ENCODE measurements at regions of chr14 and their contacts with region 1.

Region 1: DNA sequence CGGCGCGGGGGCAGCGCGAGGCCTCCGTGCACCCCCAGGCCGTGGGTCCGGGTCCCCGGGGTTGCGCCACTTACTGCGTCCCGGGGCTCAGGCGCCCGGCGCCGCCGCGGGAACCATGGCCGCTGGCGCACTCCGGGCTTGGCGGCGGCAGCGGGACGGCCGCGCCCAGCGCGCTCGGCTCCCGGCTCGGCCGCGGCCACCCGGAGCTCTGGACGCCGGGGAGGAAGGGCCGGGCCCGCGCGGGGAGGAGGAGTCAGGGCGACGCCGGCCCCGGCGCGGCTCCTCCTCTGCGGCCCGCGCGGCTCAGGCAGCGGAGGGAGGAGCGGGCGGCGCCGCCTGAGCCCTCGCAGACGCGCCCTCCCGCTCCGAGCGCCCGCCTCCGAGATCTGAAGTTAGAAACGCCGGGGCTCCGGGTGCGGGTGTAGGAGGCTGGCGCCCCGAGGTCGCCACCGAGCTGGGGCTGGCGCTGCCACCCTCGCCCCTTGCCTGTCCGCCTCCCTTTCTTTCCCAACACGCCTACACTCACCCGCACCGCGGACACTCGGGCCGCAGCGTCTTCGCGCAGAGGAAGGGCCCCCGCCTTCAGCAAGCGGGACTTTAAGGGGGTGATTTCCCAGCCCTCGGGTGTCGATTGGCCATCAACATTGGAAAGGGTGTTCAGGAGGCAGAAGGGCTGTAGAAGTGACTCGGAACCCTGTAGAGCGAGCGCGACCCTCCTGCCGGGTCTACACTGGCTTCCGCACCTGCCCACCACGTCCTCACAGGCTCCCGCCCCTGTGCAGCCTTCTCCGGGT is at the start of gene NIN:
- DNase-seq: peak; percentile 47 to 89 (median 68)
- ATAC-seq: peak; percentile 83
- H3K4me3 ChIP-seq: peak within 1 kb of the TSS; percentile 90
- H3K4me3 Mint-ChIP-seq: peak within 1 kb of the TSS; percentile 99
- H3K27ac ChIP-seq: peak within 1 kb of the TSS; percentile 65 to 88
- H3K27ac Mint-ChIP-seq: peak within 1 kb of the TSS; percentile 92
- H3K4me1 ChIP-seq: peaks cover 37% of the 10 kb centered on the region
- H3K4me1 Mint-ChIP-seq: peaks cover 74% of the 10 kb centered on the region
- H3K27me3 ChIP-seq: no peaks in the 10 kb centered on the region
- H3K27me3 Mint-ChIP-seq: no peaks in the 10 kb centered on the region
- CTCF ChIP-seq: no peak
- total RNA-seq, gene NIN: 96.8 to 98.5 TPM

Region 2: DNA sequence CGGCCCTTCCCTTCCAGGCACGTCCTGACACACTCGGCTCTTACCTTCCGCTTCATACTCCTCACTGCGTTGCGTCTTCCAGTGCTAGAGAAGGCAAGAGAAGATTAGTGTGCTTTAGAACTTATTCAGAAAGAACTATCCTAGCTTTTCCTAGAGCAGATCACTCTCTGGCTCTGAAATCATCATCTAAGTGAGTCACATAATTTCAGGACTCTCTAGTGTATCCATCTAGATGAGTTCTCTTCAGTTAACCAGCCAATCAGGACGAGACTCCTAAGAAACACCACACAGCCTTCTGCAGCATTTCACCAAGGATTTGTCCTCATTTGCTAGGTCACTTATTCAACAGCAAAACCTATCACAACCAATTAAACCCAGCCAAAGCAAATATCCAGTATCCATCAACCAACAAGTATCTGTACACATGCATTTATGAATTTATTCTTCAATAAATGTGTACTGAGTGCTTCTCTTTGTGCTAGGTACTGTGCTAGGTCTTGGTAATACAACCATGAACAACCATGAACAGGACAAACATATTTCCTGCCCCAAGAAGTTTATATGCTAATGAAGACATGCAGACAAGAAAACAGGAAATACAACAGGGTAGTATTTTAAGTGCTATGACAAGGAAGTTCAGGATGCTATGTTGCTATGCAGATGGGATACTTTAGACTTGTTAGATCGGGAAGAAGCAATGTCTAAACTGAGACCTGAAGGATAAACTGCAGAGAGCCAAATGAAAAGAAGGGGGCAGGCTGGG is 52.2 kb before region 1 on chr14:
- CTCF ChIA-PET with region 1: interaction called, 4 read pairs
- POLR2A ChIA-PET with region 1: interaction called, 17 read pairs
- intact Hi-C with region 1: loop called in 1 of 2 experiments (anchors 10 kb)
- DNase-seq: peak in 1 of 14 experiments; percentile 37
- ATAC-seq: no peak
- H3K4me3 ChIP-seq: no peak overlapping the region
- H3K4me3 Mint-ChIP-seq: no peak overlapping the region
- H3K27ac ChIP-seq: no peak overlapping the region
- H3K27ac Mint-ChIP-seq: peak overlapping the region; percentile 54
- H3K4me1 ChIP-seq: peaks cover 30% of the 10 kb centered on the region
- H3K4me1 Mint-ChIP-seq: peaks cover 77% of the 10 kb centered on the region
- H3K27me3 ChIP-seq: no peaks in the 10 kb centered on the region
- H3K27me3 Mint-ChIP-seq: no peaks in the 10 kb centered on the region
- CTCF ChIP-seq: no peak

Region 3: DNA sequence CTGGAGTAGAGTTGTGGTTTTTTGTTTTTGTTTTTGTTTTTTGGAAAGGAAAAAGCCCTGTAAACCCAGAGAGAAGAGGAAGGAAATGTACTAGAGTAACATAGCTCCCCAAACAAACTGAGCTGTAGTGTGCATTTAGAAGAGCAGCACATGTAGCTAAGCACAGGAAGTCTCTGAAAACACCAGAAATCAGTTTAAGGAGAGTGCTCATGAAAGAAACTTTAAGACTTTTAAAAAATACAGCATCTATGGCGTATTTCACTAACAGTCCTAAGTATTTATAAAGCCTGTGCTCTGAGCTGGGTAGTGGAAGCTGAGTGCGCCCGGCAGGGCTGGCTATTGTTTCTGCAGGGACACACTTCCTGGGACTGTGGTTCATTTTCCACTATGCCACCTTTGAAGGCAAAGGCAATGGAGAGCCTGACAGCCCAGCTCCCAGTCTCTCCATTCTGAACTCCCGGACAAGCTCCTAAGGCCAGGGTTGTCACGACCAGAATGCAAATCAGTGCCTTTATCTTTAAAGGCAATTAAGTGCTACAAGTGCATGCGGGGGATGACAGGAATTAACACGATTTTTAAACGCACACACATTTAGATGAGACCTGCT is 45.6 kb before region 1 on chr14:
- CTCF ChIA-PET with region 1: interaction called, 3 read pairs
- POLR2A ChIA-PET with region 1: interaction called, 49 read pairs
- intact Hi-C with region 1: loop called (anchors 5 to 10 kb)
- DNase-seq: peak in 4 of 14 experiments; percentile 22 to 39 (median 30)
- ATAC-seq: peak; percentile 67
- H3K4me3 ChIP-seq: no peak overlapping the region
- H3K4me3 Mint-ChIP-seq: peak overlapping the region; percentile 49
- H3K27ac ChIP-seq: peak overlapping the region; percentile 65 to 74
- H3K27ac Mint-ChIP-seq: peak overlapping the region; percentile 94
- H3K4me1 ChIP-seq: peaks cover 46% of the 10 kb centered on the region
- H3K4me1 Mint-ChIP-seq: peaks cover 87% of the 10 kb centered on the region
- H3K27me3 ChIP-seq: no peaks in the 10 kb centered on the region
- H3K27me3 Mint-ChIP-seq: no peaks in the 10 kb centered on the region
- CTCF ChIP-seq: no peak

Region 4: DNA sequence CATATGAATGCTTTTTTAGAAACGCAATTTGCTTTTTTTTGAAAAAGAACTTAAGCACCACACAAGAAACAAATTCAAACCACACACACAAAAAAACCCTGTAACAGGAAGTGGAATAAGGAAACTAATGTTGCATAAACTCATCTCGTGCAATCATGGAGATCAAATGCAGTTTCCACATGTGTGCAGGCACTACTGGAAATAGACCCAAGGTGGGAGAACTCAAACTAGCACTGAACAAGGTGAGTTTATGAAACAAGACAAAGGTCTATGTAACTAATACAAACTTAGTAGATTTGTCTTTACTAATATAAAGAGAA is 17.6 kb before region 1 on chr14:
- CTCF ChIA-PET with region 1: interaction called, 3 read pairs
- POLR2A ChIA-PET with region 1: interaction called, 23 read pairs
- intact Hi-C with region 1: loop called in 1 of 2 experiments (anchors 2 kb)
- DNase-seq: peak in 4 of 14 experiments; percentile 15 to 78 (median 72)
- ATAC-seq: peak; percentile 89
- H3K4me3 ChIP-seq: peak overlapping the region; percentile 28
- H3K4me3 Mint-ChIP-seq: peak overlapping the region; percentile 82
- H3K27ac ChIP-seq: peak overlapping the region; percentile 56 to 57
- H3K27ac Mint-ChIP-seq: peak overlapping the region; percentile 81
- H3K4me1 ChIP-seq: peaks cover 42% of the 10 kb centered on the region
- H3K4me1 Mint-ChIP-seq: peaks cover 65% of the 10 kb centered on the region
- H3K27me3 ChIP-seq: no peaks in the 10 kb centered on the region
- H3K27me3 Mint-ChIP-seq: no peaks in the 10 kb centered on the region
- CTCF ChIP-seq: no peak

Region 5: GRCh38 chr14:50920482-50921230 is 89.5 kb after region 1 on chr14:
- CTCF ChIA-PET with region 1: no interaction called
- POLR2A ChIA-PET with region 1: no interaction called
- intact Hi-C with region 1: no loop called
- DNase-seq: no peak
- ATAC-seq: no peak
- H3K4me3 ChIP-seq: no peak overlapping the region
- H3K4me3 Mint-ChIP-seq: no peak overlapping the region
- H3K27ac ChIP-seq: no peak overlapping the region
- H3K27ac Mint-ChIP-seq: no peak overlapping the region
- H3K4me1 ChIP-seq: no peaks in the 10 kb centered on the region
- H3K4me1 Mint-ChIP-seq: no peaks in the 10 kb centered on the region
- H3K27me3 ChIP-seq: peaks cover 2 to 3% of the 10 kb centered on the region in 2 experiments
- H3K27me3 Mint-ChIP-seq: peaks cover 6% of the 10 kb centered on the region
- CTCF ChIP-seq: no peak